Aorta (tissue), 5 donors: ENCODE measurements at regions of chr10 and their contacts with region 1.

Region 1: DNA sequence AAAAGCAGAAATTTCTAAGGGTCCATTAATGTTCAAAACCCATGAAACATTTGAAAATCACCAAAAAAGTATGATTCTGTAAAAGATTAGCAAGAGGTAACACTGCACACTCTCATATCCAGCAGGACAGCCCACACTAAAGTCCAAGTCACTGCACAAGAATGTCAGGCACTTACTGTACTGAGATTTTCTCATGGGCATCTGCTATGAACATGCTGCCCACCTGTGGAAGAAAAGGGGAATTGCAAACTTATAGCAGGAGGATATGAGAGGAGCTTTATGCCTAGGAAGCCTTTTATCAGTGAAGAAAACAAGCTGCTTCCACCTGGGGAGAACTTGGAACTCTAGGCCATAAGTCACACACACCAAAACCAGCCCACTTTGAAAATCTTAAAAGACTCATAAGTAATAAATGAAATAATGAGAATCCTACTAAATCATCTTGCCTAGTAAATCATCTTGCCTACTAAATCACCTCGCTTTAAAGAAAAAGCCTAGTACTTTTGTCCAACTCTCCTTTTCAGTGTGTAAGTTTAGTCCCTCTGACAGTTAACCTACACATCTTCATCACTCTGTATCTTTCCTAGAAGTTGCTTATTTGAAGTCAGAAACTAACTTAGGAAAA is 46.1 kb downstream of the ARMH3 start:
- DNase-seq: no peak
- ATAC-seq: peak; percentile 92
- H3K4me3 ChIP-seq: no peak overlapping the region
- H3K27ac ChIP-seq: no peak overlapping the region
- H3K4me1 ChIP-seq: no peaks in the 10 kb centered on the region
- H3K27me3 ChIP-seq: no peaks in the 10 kb centered on the region

Region 2: GRCh38 chr10:101782811-101783735 is 226.8 kb before region 1 on chr10 and contains the start of gene NPM3:
- intact Hi-C with region 1: loop called in 1 of 2 experiments (anchors 5 kb)
- DNase-seq: peak; percentile 89 to 94
- ATAC-seq: peak; percentile 75
- H3K4me3 ChIP-seq: peak within 1 kb of the TSS; percentile 43 to 49
- H3K27ac ChIP-seq: no peak within 1 kb of the TSS
- H3K4me1 ChIP-seq: no peaks in the 10 kb centered on the region
- H3K27me3 ChIP-seq: no peaks in the 10 kb centered on the region
- total RNA-seq, gene NPM3: 12.7 to 19.8 TPM

Region 3: GRCh38 chr10:101830322-101831168 is 179.4 kb before region 1 on chr10:
- intact Hi-C with region 1: loop called in 1 of 2 experiments (anchors 10 kb)
- DNase-seq: peak; percentile 95 to 96
- ATAC-seq: peak; percentile 94
- H3K4me3 ChIP-seq: no peak overlapping the region
- H3K27ac ChIP-seq: no peak overlapping the region
- H3K4me1 ChIP-seq: no peaks in the 10 kb centered on the region
- H3K27me3 ChIP-seq: no peaks in the 10 kb centered on the region

Region 4: GRCh38 chr10:101840741-101841453 is 169.0 kb before region 1 on chr10:
- intact Hi-C with region 1: loop called (anchors 5 to 10 kb)
- DNase-seq: peak; percentile 84 to 94
- ATAC-seq: peak; percentile 87
- H3K4me3 ChIP-seq: no peak overlapping the region
- H3K27ac ChIP-seq: no peak overlapping the region
- H3K4me1 ChIP-seq: no peaks in the 10 kb centered on the region
- H3K27me3 ChIP-seq: no peaks in the 10 kb centered on the region

Region 5: GRCh38 chr10:101889256-101890210 is 120.4 kb before region 1 on chr10:
- intact Hi-C with region 1: loop called (anchors 2 to 5 kb)
- DNase-seq: peak; percentile 80 to 90
- ATAC-seq: no peak
- H3K4me3 ChIP-seq: no peak overlapping the region
- H3K27ac ChIP-seq: no peak overlapping the region
- H3K4me1 ChIP-seq: no peaks in the 10 kb centered on the region
- H3K27me3 ChIP-seq: no peaks in the 10 kb centered on the region